PC-9 (cell line): ENCODE measurements at regions of chr6 and their contacts with region 1.

Region 1: DNA sequence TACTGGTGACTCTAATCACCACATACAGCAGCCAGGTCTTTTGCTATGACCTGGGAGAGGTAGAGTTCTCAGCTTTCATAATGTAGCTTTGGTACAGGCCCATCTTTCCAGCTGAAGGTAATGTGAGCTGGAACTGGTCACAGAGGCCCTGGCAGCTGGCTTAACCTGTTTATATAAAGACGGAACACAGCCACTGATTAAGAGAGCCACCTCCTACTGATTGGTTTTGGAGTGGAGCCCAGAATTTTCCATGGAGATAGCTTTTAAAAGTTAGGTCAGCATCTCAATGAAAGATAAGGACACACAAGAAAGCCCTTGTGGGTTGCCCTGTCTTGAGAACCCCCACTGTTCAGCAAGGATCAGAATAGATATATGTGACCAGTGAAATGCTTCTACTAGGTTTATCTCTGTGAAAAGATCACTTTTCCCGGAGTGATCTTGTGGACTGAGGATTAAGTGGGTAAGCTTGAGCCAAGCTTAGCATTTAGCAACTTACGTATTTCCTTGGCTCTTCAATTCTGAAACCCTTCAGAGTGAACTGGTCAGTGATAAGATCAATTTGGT is 213.7 kb upstream of the CITED2 start:
- DNase-seq: peak; percentile 63 to 99
- H3K4me3 ChIP-seq: peak overlapping the region; percentile 9; the same call in 1 of the 2 replicates
- H3K27ac ChIP-seq: peak overlapping the region; percentile 87
- H3K4me1 ChIP-seq: peaks cover 67% of the 10 kb centered on the region
- H3K27me3 ChIP-seq: no peaks in the 10 kb centered on the region
- CTCF ChIP-seq: no peak

Region 2: DNA sequence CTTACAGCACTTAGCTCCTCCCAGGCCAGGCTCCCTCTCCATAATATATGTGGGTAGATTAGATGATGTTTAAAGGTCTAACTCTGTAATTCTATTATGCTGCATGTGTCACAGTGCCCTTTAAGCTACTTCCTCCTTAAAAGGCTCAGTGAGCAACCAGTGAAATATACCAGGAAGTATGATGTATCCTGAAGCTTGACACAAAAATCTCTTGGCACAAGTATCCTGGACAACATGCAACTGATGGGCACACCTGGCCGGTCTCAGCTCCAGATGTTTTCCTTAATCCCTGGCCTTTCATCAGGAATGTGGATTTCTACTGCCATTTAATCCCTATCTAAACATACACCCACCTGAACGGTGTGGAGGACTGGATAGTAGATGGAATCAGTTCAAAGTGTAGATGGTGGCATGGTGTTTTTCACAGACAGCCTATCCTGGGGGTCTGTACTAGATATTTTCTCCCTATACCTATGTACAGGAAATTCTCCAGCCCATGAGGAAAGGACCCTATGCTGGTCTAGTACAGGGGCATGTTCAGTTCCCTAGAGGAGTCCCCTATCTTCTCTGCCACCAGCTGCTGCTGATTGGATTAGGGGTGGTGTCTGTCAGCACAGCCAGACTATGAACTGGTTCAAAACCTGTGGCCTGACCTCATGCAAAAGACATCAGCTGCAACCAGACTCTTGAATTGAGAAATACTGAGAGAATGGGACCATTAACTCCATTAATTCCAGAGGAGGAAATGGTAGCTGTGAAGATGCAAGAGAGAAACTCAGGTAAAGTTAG is 154.3 kb before region 1 on chr6:
- CTCF ChIA-PET with region 1: no interaction called
- POLR2A ChIA-PET with region 1: no interaction called
- intact Hi-C with region 1: loop called (anchors 1 kb)
- DNase-seq: peak in 1 of 2 experiments; percentile 89
- H3K4me3 ChIP-seq: no peak overlapping the region
- H3K27ac ChIP-seq: peak overlapping the region; percentile 33
- H3K4me1 ChIP-seq: peaks cover 53% of the 10 kb centered on the region
- H3K27me3 ChIP-seq: no peaks in the 10 kb centered on the region
- CTCF ChIP-seq: no peak

Region 3: GRCh38 chr6:139508023-139508422 is 80.1 kb before region 1 on chr6:
- CTCF ChIA-PET with region 1: no interaction called
- POLR2A ChIA-PET with region 1: no interaction called
- intact Hi-C with region 1: no loop called
- DNase-seq: no peak
- H3K4me3 ChIP-seq: no peak overlapping the region
- H3K27ac ChIP-seq: no peak overlapping the region
- H3K4me1 ChIP-seq: no peaks in the 10 kb centered on the region
- H3K27me3 ChIP-seq: no peaks in the 10 kb centered on the region
- CTCF ChIP-seq: no peak

Region 4: DNA sequence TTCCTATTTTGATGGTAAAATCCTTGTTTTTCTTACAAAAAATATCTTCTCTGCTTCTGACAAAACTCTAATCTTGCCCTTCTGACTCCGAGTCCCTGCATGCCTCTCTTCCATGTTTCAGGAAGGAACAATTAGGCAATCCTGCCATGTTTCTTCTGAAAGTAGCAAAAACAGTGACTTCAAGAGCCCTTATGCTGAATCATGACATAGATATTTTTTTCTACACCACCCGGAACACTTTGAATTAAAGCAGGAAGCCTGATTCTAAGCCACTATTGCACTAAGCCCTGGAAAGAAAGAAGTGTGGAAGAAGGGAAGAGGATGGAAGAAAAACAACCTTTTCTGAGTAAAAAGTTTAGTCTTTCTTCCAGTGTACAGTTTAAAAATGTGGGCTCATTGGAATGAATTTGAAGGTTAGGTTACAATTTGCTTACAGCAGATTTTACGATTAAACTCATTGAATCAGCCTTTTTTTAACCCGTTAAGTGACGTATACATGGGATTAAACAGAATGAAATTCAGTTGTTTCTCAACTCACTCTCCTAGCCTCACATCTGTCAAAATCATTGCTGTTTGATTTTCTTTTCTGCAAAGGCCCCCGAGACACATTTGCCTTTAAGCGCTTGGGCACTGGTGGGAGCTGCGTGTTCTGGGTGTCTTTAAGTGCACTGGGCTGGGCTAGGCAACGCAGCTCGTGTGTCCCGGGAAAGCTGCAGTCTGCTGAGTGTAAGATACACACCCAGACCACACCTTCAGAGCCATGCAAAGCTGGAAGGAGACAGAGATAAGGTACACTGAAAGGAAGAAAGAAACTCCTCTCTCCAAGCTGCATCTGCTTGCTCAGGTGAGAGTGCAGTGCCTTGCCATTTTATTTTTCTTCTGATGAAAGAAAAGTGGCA is 54.3 kb before region 1 on chr6:
- CTCF ChIA-PET with region 1: no interaction called
- POLR2A ChIA-PET with region 1: interaction called, 5 read pairs
- intact Hi-C with region 1: loop called (anchors 5 kb)
- DNase-seq: no peak
- H3K4me3 ChIP-seq: no peak overlapping the region
- H3K27ac ChIP-seq: no peak overlapping the region
- H3K4me1 ChIP-seq: 0 out of 2 replicates have a peak, but pooled peaks cover 4% of the 10 kb centered on the region
- H3K27me3 ChIP-seq: no peaks in the 10 kb centered on the region
- CTCF ChIP-seq: no peak

Region 5: DNA sequence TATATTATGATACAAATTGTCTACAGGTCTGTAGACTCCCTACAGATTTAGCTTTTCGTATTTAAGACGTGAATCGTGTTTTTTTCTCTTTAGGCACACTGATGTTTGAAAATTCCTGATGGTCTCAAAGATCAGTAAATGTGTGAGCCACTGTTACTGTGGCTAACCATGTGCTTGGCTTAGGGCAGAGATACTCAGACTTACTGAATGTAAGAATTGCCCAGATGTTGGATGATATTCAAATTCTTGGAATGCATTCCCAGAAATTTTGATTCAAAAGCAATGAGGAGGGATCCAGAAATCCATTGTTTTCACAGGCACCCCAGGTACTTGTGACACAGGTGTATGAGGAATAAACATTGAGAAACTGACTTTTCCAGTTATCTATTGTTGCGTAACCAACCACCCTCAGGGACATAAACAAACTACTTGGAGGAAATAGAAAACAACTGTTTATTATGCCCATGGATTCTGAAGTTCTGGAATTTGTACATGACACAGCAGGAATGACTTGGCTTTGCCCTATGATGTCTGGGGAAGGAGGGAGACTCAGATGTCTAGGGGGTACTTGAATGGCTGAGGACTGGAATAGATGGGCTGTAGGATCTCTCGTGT is 125.8 kb after region 1 on chr6:
- CTCF ChIA-PET with region 1: no interaction called
- POLR2A ChIA-PET with region 1: no interaction called
- intact Hi-C with region 1: loop called (anchors 2 kb)
- DNase-seq: peak; percentile 15 to 96
- H3K4me3 ChIP-seq: no peak overlapping the region
- H3K27ac ChIP-seq: peak overlapping the region; percentile 71
- H3K4me1 ChIP-seq: peaks cover 46% of the 10 kb centered on the region
- H3K27me3 ChIP-seq: no peaks in the 10 kb centered on the region
- CTCF ChIP-seq: no peak

Region 6: DNA sequence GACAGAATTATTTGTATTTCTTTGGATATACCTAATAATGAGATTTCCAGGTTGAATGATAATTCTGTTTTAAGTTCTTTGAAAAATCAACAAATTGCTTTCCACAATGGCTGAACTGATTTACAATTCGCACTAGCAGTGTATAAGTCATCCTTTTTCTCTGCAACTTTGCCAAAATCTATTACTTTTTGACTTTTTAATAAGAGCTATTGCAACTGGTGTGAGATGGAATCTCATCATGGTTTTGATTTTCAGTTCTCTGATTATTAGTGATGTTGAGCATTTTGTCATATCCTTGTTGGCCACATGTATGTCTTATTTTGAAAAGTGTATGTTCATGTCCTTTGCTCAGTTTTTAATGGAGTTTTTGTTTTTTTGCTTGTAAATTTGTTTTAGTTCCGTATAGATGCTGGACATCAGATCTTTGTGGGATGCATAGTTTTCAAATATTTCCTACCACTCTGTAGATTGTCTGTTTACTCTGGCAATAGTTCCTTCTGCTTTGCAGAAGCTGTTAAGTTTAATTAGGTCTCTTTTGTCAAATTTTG is 196.1 kb after region 1 on chr6:
- CTCF ChIA-PET with region 1: no interaction called
- POLR2A ChIA-PET with region 1: interaction called, 34 read pairs
- intact Hi-C with region 1: no loop called
- DNase-seq: no peak
- H3K4me3 ChIP-seq: no peak overlapping the region
- H3K27ac ChIP-seq: no peak overlapping the region
- H3K4me1 ChIP-seq: no peaks in the 10 kb centered on the region
- H3K27me3 ChIP-seq: no peaks in the 10 kb centered on the region
- CTCF ChIP-seq: no peak

Region 7: GRCh38 chr6:140062043-140063020 is 474.2 kb after region 1 on chr6:
- CTCF ChIA-PET with region 1: no interaction called
- POLR2A ChIA-PET with region 1: no interaction called
- intact Hi-C with region 1: loop called (anchors 5 kb)
- DNase-seq: peak; percentile 51 to 97
- H3K4me3 ChIP-seq: peak overlapping the region; percentile 4; the same call in 1 of the 2 replicates
- H3K27ac ChIP-seq: peak overlapping the region; percentile 66
- H3K4me1 ChIP-seq: peaks cover 32% of the 10 kb centered on the region
- H3K27me3 ChIP-seq: no peaks in the 10 kb centered on the region
- CTCF ChIP-seq: no peak